ENCODE measurements at regions of chr16 and their contacts with region 1.

Region 1: GRCh38 chr16:11797166-11797956 is at the start of gene ZC3H7A:
- DNase-seq: peak; percentile 97 to 99
- H3K4me3 ChIP-seq: peak within 1 kb of the TSS; percentile 64 to 92 (median 80)
- H3K27ac ChIP-seq: peak within 1 kb of the TSS; percentile 97 to 100 (median 99)
- H3K4me1 ChIP-seq: peaks cover 51 to 70% (median 63%) of the 10 kb centered on the region in 4 donors
- H3K27me3 ChIP-seq: no peaks in the 10 kb centered on the region
- CTCF ChIP-seq: peak in 5 of 7 experiments; percentile 21 to 99 (median 83)
- EP300 ChIP-seq: no peak
- POLR2A ChIP-seq: peak in 2 of 4 donors; percentile 79 to 94
- total RNA-seq, gene ZC3H7A: 49.1 to 110 (median 92.1) TPM

Region 2: GRCh38 chr16:11742539-11743307 is 54.6 kb before region 1 on chr16 and contains the start of gene TXNDC11:
- intact Hi-C with region 1: loop called (anchors 10 kb)
- DNase-seq: peak; percentile 100
- H3K4me3 ChIP-seq: peak within 1 kb of the TSS; percentile 76 to 97 (median 80)
- H3K27ac ChIP-seq: peak within 1 kb of the TSS; percentile 94 to 100 (median 98)
- H3K4me1 ChIP-seq: peaks cover 44 to 62% (median 48%) of the 10 kb centered on the region in 4 donors
- H3K27me3 ChIP-seq: no peaks in the 10 kb centered on the region
- CTCF ChIP-seq: no peak
- EP300 ChIP-seq: no peak
- POLR2A ChIP-seq: peak in 2 of 4 donors; percentile 42 to 64
- total RNA-seq, gene TXNDC11: 24.1 to 72.9 (median 51.1) TPM

Region 3: DNA sequence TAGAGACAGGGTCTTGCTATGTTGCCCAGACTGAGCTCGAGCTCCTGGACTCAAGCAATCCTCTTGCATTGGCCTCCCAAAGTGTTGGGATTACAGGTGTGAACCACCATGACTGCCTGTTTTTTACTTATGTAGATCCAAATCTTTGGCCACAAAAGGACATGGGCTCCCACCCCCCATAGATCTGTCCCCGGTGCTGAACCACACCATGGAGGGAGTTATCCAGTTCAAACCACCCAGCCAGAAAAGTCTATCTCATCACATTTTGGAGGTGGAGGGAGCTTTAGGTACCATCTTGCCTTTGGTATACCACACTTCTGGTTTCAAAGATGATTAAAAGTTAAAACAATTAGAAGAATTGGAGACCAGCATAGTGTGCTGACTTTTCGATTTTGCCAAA is 1130.2 kb after region 1 on chr16:
- intact Hi-C with region 1: no loop called
- DNase-seq: no peak
- H3K4me3 ChIP-seq: no peak overlapping the region
- H3K27ac ChIP-seq: no peak overlapping the region
- H3K4me1 ChIP-seq: no peaks in the 10 kb centered on the region
- H3K27me3 ChIP-seq: peaks cover 0 to under 1% (median 0%) of the 10 kb centered on the region in 3 donors
- CTCF ChIP-seq: no peak
- EP300 ChIP-seq: no peak
- POLR2A ChIP-seq: no peak